CD4-positive, alpha-beta T cell (primary cell): ENCODE measurements at regions of chr1 and their contacts with region 1.

Region 1: DNA sequence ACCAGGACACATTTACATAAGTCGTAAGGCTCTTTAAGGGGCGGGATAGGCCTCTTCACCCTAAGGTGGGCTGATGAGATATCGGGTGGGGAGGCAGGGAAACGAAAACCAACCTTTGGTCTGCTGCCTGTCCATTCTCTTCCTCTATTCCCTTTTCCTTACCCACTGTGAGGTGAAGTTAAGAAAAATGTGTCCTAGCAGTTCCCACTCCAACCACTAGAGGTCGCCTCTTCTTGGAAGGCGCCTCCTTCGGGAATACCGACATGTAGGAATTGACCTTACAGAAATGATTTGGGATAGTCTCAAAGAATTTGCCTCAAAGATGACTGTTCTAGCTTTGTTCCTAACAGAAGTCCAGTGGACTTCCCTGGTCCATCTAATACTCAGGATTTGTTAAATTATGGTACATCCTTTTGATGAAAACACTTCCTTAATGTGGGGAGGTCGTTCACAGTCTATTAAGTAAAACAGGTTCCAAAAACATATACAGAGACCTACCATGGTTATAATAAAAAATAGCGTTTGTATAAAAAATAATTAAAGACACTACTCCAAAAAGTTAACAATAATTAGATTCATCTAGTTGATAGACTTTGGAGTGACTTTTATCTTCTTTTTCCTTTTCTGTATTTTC is 14.1 kb downstream of the AZIN2 start:
- DNase-seq: peak in 4 of 14 experiments; percentile 11 to 54 (median 52)
- ATAC-seq: no peak
- H3K4me3 ChIP-seq: no peak overlapping the region
- H3K4me3 Mint-ChIP-seq: no peak overlapping the region
- H3K27ac ChIP-seq: no peak overlapping the region
- H3K27ac Mint-ChIP-seq: no peak overlapping the region
- H3K4me1 ChIP-seq: peaks cover 34% of the 10 kb centered on the region
- H3K4me1 Mint-ChIP-seq: peaks cover 36% of the 10 kb centered on the region
- H3K27me3 ChIP-seq: no peaks in the 10 kb centered on the region
- H3K27me3 Mint-ChIP-seq: no peaks in the 10 kb centered on the region
- CTCF ChIP-seq: peak; percentile 99

Region 2: GRCh38 chr1:33055210-33056008 is 39.7 kb before region 1 on chr1:
- CTCF ChIA-PET with region 1: no interaction called
- POLR2A ChIA-PET with region 1: interaction called, 3 read pairs
- intact Hi-C with region 1: loop called in 1 of 2 experiments (anchors 2 kb)
- DNase-seq: peak in 5 of 14 experiments; percentile 7 to 74 (median 50)
- ATAC-seq: peak; percentile 49
- H3K4me3 ChIP-seq: no peak overlapping the region
- H3K4me3 Mint-ChIP-seq: no peak overlapping the region
- H3K27ac ChIP-seq: no peak overlapping the region
- H3K27ac Mint-ChIP-seq: no peak overlapping the region
- H3K4me1 ChIP-seq: peaks cover 5% of the 10 kb centered on the region
- H3K4me1 Mint-ChIP-seq: no peaks in the 10 kb centered on the region
- H3K27me3 ChIP-seq: no peaks in the 10 kb centered on the region
- H3K27me3 Mint-ChIP-seq: peaks cover 4% of the 10 kb centered on the region
- CTCF ChIP-seq: peak; percentile 49